B cell (primary cell): ENCODE measurements at regions of chr14 and their contacts with region 1.

Region 1: DNA sequence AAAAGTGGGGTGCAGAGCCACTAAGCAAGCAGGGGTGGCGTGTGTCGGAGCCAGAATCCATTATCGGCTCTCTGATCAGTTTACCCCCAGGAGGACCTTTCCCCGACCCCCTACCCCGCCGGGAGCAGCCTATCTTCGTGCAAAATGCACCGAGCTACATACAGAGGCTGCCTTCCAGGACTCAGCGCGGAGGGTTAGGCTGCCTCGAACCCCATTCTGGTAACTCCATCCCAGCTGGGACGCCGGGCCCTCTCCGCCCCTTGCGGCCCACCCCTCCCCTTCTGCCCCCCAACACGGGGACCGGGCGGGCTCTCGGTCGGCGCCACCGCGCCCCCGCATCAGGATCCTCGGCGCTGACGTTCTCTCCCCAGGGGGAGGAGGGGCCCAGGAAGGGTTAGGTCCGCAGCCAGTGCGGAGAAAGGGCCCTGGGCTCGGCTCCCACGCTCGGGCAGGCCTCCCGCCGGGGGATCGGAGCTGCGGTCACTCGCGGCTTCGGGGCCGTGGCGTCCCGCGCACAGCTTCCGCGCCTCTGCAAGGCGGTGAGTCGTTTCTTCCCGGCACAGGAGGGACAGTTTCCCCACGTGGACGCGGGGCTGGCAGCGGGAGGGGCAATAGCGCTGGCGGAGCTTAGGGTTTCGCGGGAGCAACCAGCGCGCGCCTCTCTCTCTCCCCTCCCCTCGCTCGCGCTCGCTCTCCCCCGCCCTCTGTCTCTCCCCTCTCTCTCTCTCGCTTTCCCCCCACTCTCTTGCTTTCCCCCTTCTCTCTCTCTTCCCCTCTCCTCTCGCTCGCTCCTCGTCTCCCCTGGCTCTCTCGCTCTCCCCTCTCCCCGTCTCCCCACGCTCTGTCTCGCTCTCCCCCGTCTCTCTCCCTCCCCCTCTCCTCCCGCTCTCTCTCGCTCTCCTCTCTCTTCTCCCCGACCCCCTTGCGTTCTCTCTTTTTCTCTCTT is 12.5 kb upstream of the MAP3K9 start:
- DNase-seq: peak; percentile 58
- ATAC-seq: peak; percentile 7
- H3K4me3 ChIP-seq: peak overlapping the region; percentile 52 to 72 (median 61)
- H3K4me3 Mint-ChIP-seq: peak overlapping the region; percentile 79
- H3K27ac ChIP-seq: peak overlapping the region in 1 of 2 donors; percentile 19
- H3K27ac Mint-ChIP-seq: no peak overlapping the region
- H3K4me1 ChIP-seq: peaks cover 22 to 26% of the 10 kb centered on the region in 2 donors
- H3K4me1 Mint-ChIP-seq: peaks cover 18% of the 10 kb centered on the region
- H3K27me3 ChIP-seq: peaks cover 0 to 49% (median 30%) of the 10 kb centered on the region in 4 experiments
- H3K27me3 Mint-ChIP-seq: peaks cover 42% of the 10 kb centered on the region
- CTCF ChIP-seq: no peak

Region 2: GRCh38 chr14:70622111-70622712 is 199.6 kb before region 1 on chr14:
- CTCF ChIA-PET with region 1: interaction called, 78 read pairs
- POLR2A ChIA-PET with region 1: no interaction called
- intact Hi-C with region 1: loop called (anchors 1 kb)
- DNase-seq: peak; percentile 73
- ATAC-seq: peak; percentile 82
- H3K4me3 ChIP-seq: no peak overlapping the region
- H3K4me3 Mint-ChIP-seq: no peak overlapping the region
- H3K27ac ChIP-seq: no peak overlapping the region
- H3K27ac Mint-ChIP-seq: no peak overlapping the region
- H3K4me1 ChIP-seq: peaks cover 7 to 10% of the 10 kb centered on the region in 2 donors
- H3K4me1 Mint-ChIP-seq: peaks cover 22% of the 10 kb centered on the region
- H3K27me3 ChIP-seq: no peaks in the 10 kb centered on the region
- H3K27me3 Mint-ChIP-seq: no peaks in the 10 kb centered on the region
- CTCF ChIP-seq: peak; percentile 85

Region 3: DNA sequence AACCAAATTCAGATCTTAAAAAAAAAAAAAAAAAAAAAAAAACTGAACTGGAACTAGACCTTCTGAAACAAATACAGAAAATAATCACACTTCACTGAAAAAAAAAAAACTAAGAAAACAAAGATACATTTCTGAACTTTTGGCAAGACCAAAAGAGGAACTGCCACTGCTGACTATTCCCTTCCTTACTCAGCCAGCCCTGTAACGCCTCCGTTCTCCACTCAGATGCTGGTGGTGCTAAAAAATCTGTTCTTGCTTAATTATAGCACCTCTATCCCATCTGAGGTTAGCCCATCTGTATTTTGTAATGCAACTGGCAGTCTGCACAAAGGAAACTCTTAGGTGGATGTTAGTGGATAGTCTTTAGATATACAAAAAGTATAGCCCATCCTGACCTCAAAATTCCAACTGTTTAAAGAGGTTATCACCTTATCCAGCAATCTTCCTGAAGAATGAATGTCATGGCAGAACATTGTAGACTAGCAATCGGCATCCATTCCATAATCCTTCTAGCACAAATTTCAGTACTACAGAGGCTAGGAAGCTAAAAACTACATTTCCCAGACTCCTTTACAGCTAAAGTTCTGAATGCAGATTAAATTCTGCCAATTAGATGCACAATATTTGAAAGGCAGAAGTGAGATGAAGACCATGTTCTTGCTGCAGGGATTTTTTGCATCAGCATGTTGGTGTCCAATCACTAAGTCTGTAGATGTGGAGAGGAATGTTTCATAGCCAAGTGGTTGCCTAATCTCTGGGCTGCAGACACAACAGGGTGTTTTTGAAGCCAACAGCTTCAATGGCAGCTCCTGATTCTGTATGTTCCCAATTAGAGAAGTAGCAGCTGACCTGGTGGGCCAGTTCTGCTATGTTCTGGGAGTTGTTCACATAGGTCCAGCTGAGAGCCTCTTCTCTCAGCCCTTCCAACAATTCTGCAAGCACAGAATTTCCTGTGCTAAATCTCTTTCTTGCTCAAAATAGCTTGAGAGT is 18.2 kb before region 1 on chr14:
- CTCF ChIA-PET with region 1: interaction called, 42 read pairs
- POLR2A ChIA-PET with region 1: no interaction called
- intact Hi-C with region 1: loop called (anchors 2 kb)
- DNase-seq: peak; percentile 66
- ATAC-seq: peak; percentile 76
- H3K4me3 ChIP-seq: peak overlapping the region in 3 of 5 experiments; percentile 0 to 45 (median 24)
- H3K4me3 Mint-ChIP-seq: peak overlapping the region; percentile 62
- H3K27ac ChIP-seq: peak overlapping the region; percentile 6 to 50
- H3K27ac Mint-ChIP-seq: peak overlapping the region; percentile 74
- H3K4me1 ChIP-seq: peaks cover 24 to 30% of the 10 kb centered on the region in 2 donors
- H3K4me1 Mint-ChIP-seq: peaks cover 42% of the 10 kb centered on the region
- H3K27me3 ChIP-seq: no peaks in the 10 kb centered on the region
- H3K27me3 Mint-ChIP-seq: no peaks in the 10 kb centered on the region
- CTCF ChIP-seq: no peak

Region 4: DNA sequence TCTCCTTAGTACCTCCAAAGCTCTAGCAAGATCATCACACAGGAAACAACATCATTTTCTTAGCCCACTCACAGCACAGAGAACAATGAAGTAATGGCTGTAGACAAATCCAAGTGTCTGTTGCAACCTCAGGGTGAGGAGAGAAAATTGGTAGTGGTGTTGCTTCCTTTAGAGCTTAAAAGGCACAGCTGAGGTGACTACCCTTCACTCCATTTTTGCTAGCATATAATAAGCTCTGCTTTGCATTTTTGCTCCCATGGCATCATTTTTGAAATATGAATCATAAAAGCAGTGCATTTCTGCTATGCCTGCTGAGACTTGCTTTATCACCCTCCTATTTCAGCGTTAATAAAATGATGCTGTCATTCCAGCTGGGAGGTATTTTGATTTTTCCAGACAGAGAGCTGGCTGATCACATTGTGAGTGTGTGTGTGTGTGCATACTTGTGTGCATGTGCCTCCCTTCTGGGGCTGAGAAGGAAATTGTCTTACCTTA is 66.9 kb after region 1 on chr14:
- CTCF ChIA-PET with region 1: no interaction called
- POLR2A ChIA-PET with region 1: no interaction called
- intact Hi-C with region 1: no loop called
- DNase-seq: no peak
- ATAC-seq: no peak
- H3K4me3 ChIP-seq: no peak overlapping the region
- H3K4me3 Mint-ChIP-seq: no peak overlapping the region
- H3K27ac ChIP-seq: no peak overlapping the region
- H3K27ac Mint-ChIP-seq: no peak overlapping the region
- H3K4me1 ChIP-seq: peaks cover 22 to 23% of the 10 kb centered on the region in 2 donors
- H3K4me1 Mint-ChIP-seq: peaks cover 25% of the 10 kb centered on the region
- H3K27me3 ChIP-seq: no peaks in the 10 kb centered on the region
- H3K27me3 Mint-ChIP-seq: no peaks in the 10 kb centered on the region
- CTCF ChIP-seq: no peak

Region 5: DNA sequence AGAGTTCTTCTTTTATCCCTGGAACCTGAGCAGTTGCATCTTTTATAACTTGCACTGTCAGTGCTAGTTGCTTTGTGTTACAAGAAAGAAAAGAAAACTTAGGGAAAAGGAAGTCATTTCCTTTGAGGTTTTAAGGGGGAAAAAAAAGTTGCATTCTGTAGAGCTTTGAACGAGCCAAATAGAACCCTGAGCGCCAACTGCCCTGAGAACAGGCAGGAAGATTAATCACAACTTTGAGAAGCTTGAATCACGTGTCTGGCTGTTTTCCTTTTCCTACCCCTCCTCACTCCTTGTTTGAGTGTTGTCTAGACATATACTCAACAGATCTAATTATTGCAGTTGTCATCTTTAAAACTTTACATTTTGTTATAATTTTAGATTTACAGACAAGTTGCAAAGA is 97.9 kb after region 1 on chr14:
- CTCF ChIA-PET with region 1: no interaction called
- POLR2A ChIA-PET with region 1: no interaction called
- intact Hi-C with region 1: no loop called
- DNase-seq: no peak
- ATAC-seq: no peak
- H3K4me3 ChIP-seq: no peak overlapping the region
- H3K4me3 Mint-ChIP-seq: no peak overlapping the region
- H3K27ac ChIP-seq: peak overlapping the region in 1 of 2 donors; percentile 48
- H3K27ac Mint-ChIP-seq: peak overlapping the region; percentile 38
- H3K4me1 ChIP-seq: peaks cover 17 to 22% of the 10 kb centered on the region in 2 donors
- H3K4me1 Mint-ChIP-seq: peaks cover 76% of the 10 kb centered on the region
- H3K27me3 ChIP-seq: no peaks in the 10 kb centered on the region
- H3K27me3 Mint-ChIP-seq: no peaks in the 10 kb centered on the region
- CTCF ChIP-seq: no peak

Region 6: GRCh38 chr14:70955543-70956480 is 134.0 kb after region 1 on chr14:
- CTCF ChIA-PET with region 1: interaction called, 46 read pairs
- POLR2A ChIA-PET with region 1: no interaction called
- intact Hi-C with region 1: loop called (anchors 5 kb)
- DNase-seq: peak; percentile 38
- ATAC-seq: peak; percentile 39
- H3K4me3 ChIP-seq: no peak overlapping the region
- H3K4me3 Mint-ChIP-seq: no peak overlapping the region
- H3K27ac ChIP-seq: no peak overlapping the region
- H3K27ac Mint-ChIP-seq: no peak overlapping the region
- H3K4me1 ChIP-seq: no peaks in the 10 kb centered on the region
- H3K4me1 Mint-ChIP-seq: peaks cover 4% of the 10 kb centered on the region
- H3K27me3 ChIP-seq: no peaks in the 10 kb centered on the region
- H3K27me3 Mint-ChIP-seq: no peaks in the 10 kb centered on the region
- CTCF ChIP-seq: peak; percentile 57

Region 7: GRCh38 chr14:70972107-70972976 is 150.5 kb after region 1 on chr14:
- CTCF ChIA-PET with region 1: interaction called, 13 read pairs
- POLR2A ChIA-PET with region 1: no interaction called
- intact Hi-C with region 1: loop called (anchors 1 kb)
- DNase-seq: peak; percentile 87
- ATAC-seq: peak; percentile 75
- H3K4me3 ChIP-seq: no peak overlapping the region
- H3K4me3 Mint-ChIP-seq: no peak overlapping the region
- H3K27ac ChIP-seq: no peak overlapping the region
- H3K27ac Mint-ChIP-seq: no peak overlapping the region
- H3K4me1 ChIP-seq: no peaks in the 10 kb centered on the region
- H3K4me1 Mint-ChIP-seq: peaks cover 1% of the 10 kb centered on the region
- H3K27me3 ChIP-seq: no peaks in the 10 kb centered on the region
- H3K27me3 Mint-ChIP-seq: no peaks in the 10 kb centered on the region
- CTCF ChIP-seq: peak; percentile 94